Naive thymus-derived CD4-positive, alpha-beta T cell (primary cell): ENCODE measurements at regions of chr9 and their contacts with region 1.

Region 1: DNA sequence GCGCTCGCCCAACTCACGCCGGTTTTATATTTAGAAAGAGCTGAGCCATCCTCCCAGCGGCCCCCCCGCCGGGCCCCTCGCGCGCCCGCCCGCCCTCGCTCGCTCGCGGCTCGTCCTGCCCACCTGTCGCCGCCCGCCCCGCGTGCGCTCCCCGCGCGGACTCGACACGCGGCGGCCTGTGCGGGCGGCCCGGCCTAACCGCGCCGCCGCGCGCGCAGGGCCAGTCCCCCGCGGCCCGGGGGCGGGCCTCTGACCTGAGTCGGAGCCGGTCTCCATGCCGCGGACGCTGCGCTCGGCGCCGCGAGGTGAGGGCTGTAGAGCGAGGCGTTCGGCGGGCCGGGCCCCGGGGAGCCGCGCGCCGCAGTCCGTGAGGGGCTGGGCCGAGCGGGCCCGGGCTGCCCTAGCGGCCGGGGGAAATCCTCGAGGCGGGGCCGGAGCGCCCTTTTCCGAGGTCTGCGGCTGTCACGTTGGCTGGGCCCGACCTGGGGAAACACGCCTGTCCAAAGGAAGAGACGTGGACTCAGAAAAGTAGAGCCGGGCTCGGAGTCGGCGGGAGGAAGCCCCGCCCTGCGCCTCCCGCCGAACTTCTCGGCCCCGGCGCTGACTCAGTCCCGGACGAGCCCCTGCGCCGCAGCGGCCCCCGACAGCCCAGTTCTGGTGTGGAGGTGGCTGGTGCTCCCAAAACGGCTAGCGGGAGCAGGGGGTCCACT is at the start of gene ECPAS:
- DNase-seq: peak; percentile 53 to 78 (median 62)
- ATAC-seq: peak; percentile 74
- H3K4me3 ChIP-seq: peak within 1 kb of the TSS; percentile 66
- H3K4me3 Mint-ChIP-seq: peak within 1 kb of the TSS; percentile 69 to 93 (median 88)
- H3K27ac ChIP-seq: peak within 1 kb of the TSS; percentile 74
- H3K27ac Mint-ChIP-seq: peak within 1 kb of the TSS; percentile 60 to 92 (median 85)
- H3K4me1 ChIP-seq: peaks cover 0 to 8% of the 10 kb centered on the region in 2 donors
- H3K4me1 Mint-ChIP-seq: peaks cover 16 to 31% (median 27%) of the 10 kb centered on the region in 7 donors
- H3K27me3 ChIP-seq: no peaks in the 10 kb centered on the region
- H3K27me3 Mint-ChIP-seq: peaks cover 0 to 13% (median 5%) of the 10 kb centered on the region in 5 donors
- total RNA-seq, gene ECPAS: 35.4 to 86.1 (median 49.2) TPM

Region 2: GRCh38 chr9:111427186-111427585 is 56.8 kb before region 1 on chr9:
- CTCF ChIA-PET with region 1: no interaction called
- POLR2A ChIA-PET with region 1: no interaction called
- intact Hi-C with region 1: loop called in 1 of 2 experiments (anchors 5 kb)
- DNase-seq: no peak
- ATAC-seq: no peak
- H3K4me3 ChIP-seq: no peak overlapping the region
- H3K4me3 Mint-ChIP-seq: no peak overlapping the region
- H3K27ac ChIP-seq: no peak overlapping the region
- H3K27ac Mint-ChIP-seq: peak overlapping the region in 1 of 9 donors; percentile 47
- H3K4me1 ChIP-seq: no peaks in the 10 kb centered on the region
- H3K4me1 Mint-ChIP-seq: peaks cover 0 to 13% (median 0%) of the 10 kb centered on the region in 7 donors
- H3K27me3 ChIP-seq: no peaks in the 10 kb centered on the region
- H3K27me3 Mint-ChIP-seq: no peaks in the 10 kb centered on the region

Region 3: DNA sequence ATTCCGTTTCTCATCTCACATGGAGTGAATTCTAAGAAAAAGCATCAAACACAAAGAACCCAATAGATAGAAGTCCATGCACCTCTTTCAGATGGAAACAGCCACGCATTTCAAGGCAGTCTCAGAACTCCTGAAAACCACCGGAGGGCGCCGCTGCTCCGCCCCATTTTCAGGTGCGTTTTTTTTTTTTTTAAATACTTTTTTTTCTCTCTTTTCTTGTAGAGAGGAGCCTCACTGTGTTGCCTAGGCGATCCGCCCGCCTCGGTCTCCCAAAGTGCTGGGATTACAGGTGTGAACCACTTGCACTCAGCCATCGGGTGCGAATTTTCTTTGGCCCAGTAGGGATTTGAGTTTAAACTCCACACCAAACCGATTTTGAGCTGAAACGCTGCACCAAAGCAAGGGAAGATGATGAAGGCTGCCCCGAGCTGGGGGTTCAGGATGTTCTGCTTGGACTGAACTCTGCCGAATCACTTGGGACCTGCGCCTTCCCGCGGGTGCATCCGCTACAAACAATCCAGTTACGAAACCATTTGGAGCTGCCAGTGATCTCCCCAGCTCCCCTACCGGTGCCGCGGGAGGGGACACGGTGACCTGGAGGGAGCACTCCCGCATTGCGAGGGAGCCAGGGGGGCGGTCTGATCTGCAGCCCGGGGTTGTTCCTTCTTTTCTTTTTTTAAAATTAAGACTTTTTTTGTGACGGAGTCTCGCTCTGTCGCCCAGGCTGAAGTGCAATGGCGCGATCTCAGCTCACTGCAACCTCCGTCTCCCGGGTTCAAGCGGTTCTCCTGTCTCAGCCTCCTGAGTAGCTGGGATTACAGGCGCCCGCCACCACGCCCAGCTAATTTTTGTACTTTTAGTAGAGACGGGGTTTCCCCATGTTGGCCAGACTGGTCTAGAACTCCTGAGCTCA is 114.1 kb after region 1 on chr9:
- CTCF ChIA-PET with region 1: no interaction called
- POLR2A ChIA-PET with region 1: interaction called, 3 read pairs
- intact Hi-C with region 1: loop called (anchors 10 kb)
- DNase-seq: peak; percentile 40 to 77 (median 65)
- ATAC-seq: peak; percentile 82
- H3K4me3 ChIP-seq: peak overlapping the region; percentile 33
- H3K4me3 Mint-ChIP-seq: peak overlapping the region; percentile 77 to 94 (median 89)
- H3K27ac ChIP-seq: no peak overlapping the region
- H3K27ac Mint-ChIP-seq: peak overlapping the region in 4 of 9 donors; percentile 2 to 62 (median 42)
- H3K4me1 ChIP-seq: peaks cover 12 to 15% of the 10 kb centered on the region in 2 donors
- H3K4me1 Mint-ChIP-seq: peaks cover 13 to 29% (median 24%) of the 10 kb centered on the region in 7 donors
- H3K27me3 ChIP-seq: peaks cover 0 to 9% of the 10 kb centered on the region in 2 donors
- H3K27me3 Mint-ChIP-seq: peaks cover 17 to 42% (median 29%) of the 10 kb centered on the region in 5 donors

Region 4: DNA sequence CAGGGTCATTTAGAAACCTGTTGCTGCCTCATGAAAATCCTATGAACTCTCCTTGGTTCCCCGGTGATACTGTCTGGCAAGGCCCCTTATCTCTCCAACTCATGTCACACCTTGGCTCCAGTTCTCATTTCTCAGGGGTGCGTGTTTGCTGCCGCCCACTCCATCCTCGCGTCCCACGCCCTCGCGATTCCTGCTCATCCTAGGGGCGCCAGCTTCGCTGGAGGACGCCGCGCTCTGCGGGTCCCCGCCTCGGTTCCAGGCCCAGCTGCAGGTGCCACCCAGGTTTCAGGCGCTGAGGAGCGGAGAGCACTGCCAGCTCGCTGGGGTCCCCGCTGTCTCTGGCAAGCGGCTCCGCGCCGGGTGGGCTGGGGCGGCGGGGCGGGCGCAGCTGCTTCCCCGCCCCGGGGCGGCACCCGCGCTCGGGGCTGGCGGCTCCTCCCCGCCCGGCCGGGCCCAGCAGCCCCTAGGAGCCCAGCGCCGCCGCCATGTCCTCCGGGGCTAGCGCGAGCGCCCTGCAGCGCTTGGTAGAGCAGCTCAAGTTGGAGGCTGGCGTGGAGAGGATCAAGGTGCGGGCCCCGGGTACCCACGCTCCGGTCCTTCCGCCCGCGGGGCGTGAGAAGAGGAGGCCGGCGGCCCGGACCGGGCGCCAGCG is 177.3 kb after region 1 on chr9 and contains the start of gene GNG10:
- CTCF ChIA-PET with region 1: no interaction called
- POLR2A ChIA-PET with region 1: interaction called, 4 read pairs
- intact Hi-C with region 1: loop called (anchors 1 kb)
- DNase-seq: peak; percentile 57 to 79 (median 68)
- ATAC-seq: peak; percentile 95
- H3K4me3 ChIP-seq: peak within 1 kb of the TSS; percentile 70
- H3K4me3 Mint-ChIP-seq: peak within 1 kb of the TSS; percentile 87 to 97 (median 93)
- H3K27ac ChIP-seq: peak within 1 kb of the TSS; percentile 71
- H3K27ac Mint-ChIP-seq: peak within 1 kb of the TSS; percentile 82 to 97 (median 92)
- H3K4me1 ChIP-seq: peaks cover 18 to 31% of the 10 kb centered on the region in 2 donors
- H3K4me1 Mint-ChIP-seq: peaks cover 16 to 44% (median 32%) of the 10 kb centered on the region in 7 donors
- H3K27me3 ChIP-seq: no peaks in the 10 kb centered on the region
- H3K27me3 Mint-ChIP-seq: no peaks in the 10 kb centered on the region
- total RNA-seq, gene GNG10: 5.3 to 26.1 (median 12.2) TPM

Region 5: GRCh38 chr9:112194969-112195431 is 711.0 kb after region 1 on chr9:
- CTCF ChIA-PET with region 1: no interaction called
- POLR2A ChIA-PET with region 1: no interaction called
- intact Hi-C with region 1: no loop called
- DNase-seq: no peak
- ATAC-seq: no peak
- H3K4me3 ChIP-seq: no peak overlapping the region
- H3K4me3 Mint-ChIP-seq: no peak overlapping the region
- H3K27ac ChIP-seq: no peak overlapping the region
- H3K27ac Mint-ChIP-seq: no peak overlapping the region
- H3K4me1 ChIP-seq: no peaks in the 10 kb centered on the region
- H3K4me1 Mint-ChIP-seq: peaks cover 0 to 12% (median 0%) of the 10 kb centered on the region in 7 donors
- H3K27me3 ChIP-seq: no peaks in the 10 kb centered on the region
- H3K27me3 Mint-ChIP-seq: no peaks in the 10 kb centered on the region

Region 6: GRCh38 chr9:112486221-112487007 is 1002.4 kb after region 1 on chr9 and contains the start of gene KIAA1958:
- CTCF ChIA-PET with region 1: no interaction called
- POLR2A ChIA-PET with region 1: no interaction called
- intact Hi-C with region 1: loop called (anchors 2 to 10 kb)
- DNase-seq: peak; percentile 51 to 88 (median 73)
- ATAC-seq: peak; percentile 88
- H3K4me3 ChIP-seq: peak within 1 kb of the TSS; percentile 69
- H3K4me3 Mint-ChIP-seq: peak within 1 kb of the TSS; percentile 95 to 100 (median 98)
- H3K27ac ChIP-seq: peak within 1 kb of the TSS; percentile 72
- H3K27ac Mint-ChIP-seq: peak within 1 kb of the TSS; percentile 93 to 98 (median 97)
- H3K4me1 ChIP-seq: peaks cover 4 to 6% of the 10 kb centered on the region in 2 donors
- H3K4me1 Mint-ChIP-seq: peaks cover 19 to 64% (median 49%) of the 10 kb centered on the region in 7 donors
- H3K27me3 ChIP-seq: no peaks in the 10 kb centered on the region
- H3K27me3 Mint-ChIP-seq: peaks cover 0 to 6% (median 0%) of the 10 kb centered on the region in 5 donors
- total RNA-seq, gene KIAA1958: 6.2 to 8.3 (median 7.0) TPM

Region 7: GRCh38 chr9:112750111-112750767 is 1266.2 kb after region 1 on chr9 and contains the start of gene SNX30:
- CTCF ChIA-PET with region 1: no interaction called
- POLR2A ChIA-PET with region 1: no interaction called
- intact Hi-C with region 1: loop called in 1 of 2 experiments (anchors 10 kb)
- DNase-seq: peak; percentile 66 to 83 (median 75)
- ATAC-seq: peak; percentile 94
- H3K4me3 ChIP-seq: peak within 1 kb of the TSS; percentile 70
- H3K4me3 Mint-ChIP-seq: peak within 1 kb of the TSS; percentile 88 to 94 (median 92)
- H3K27ac ChIP-seq: peak within 1 kb of the TSS; percentile 68
- H3K27ac Mint-ChIP-seq: peak within 1 kb of the TSS; percentile 88 to 98 (median 96)
- H3K4me1 ChIP-seq: peaks cover 46% of the 10 kb centered on the region in 2 donors
- H3K4me1 Mint-ChIP-seq: peaks cover 39 to 66% (median 60%) of the 10 kb centered on the region in 7 donors
- H3K27me3 ChIP-seq: no peaks in the 10 kb centered on the region
- H3K27me3 Mint-ChIP-seq: peaks cover 0 to 4% (median 0%) of the 10 kb centered on the region in 5 donors
- total RNA-seq, gene SNX30: 6.6 to 15.8 (median 9.2) TPM

Region 8: DNA sequence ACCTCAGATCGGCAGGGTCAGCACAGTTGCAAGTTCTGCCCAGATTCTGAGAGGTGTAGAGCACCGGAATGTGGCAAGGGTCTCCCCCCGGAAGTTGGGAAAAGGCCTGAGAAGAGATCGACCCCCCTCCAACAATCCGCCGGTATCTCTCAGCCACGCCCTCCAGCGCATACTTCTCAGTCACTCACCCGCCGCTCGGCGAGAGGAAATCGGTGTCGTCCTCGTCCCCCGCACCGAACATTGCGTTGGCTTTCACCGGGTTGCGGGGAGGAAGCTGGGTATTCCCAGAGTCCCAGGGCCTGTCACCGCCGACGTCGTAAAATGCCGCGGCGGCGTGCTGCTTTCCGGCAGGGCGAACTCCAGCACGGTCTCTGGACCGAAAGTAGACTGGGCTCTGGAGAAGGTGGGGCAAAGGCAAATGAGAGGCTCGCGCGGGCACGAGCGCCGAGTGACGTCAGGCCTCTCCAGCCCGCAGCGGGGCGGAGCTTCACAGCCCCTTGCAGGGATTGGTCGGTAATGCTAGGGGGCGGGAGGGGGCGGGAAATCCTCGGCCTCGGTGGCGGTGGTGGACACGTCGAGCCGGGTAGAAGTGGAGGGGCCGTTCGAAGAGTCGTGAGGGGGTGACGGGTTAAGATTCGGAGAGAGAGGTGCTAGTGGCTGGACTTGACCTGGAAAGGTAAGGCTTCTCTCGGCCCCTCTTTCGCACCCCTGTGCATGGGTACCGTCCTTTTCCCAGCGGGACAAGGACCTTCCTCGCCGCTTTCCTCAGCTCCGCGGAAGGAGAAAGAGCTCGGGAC is 1737.2 kb after region 1 on chr9 and contains the starts of genes FKBP15 and SLC31A1:
- CTCF ChIA-PET with region 1: no interaction called
- POLR2A ChIA-PET with region 1: no interaction called
- intact Hi-C with region 1: loop called in 1 of 2 experiments (anchors 2 kb)
- DNase-seq: peak; percentile 88 to 96 (median 96)
- ATAC-seq: peak; percentile 99
- H3K4me3 ChIP-seq: peak within 1 kb of the TSS; percentile 91
- H3K4me3 Mint-ChIP-seq: peak within 1 kb of the TSS; percentile 89 to 99 (median 94)
- H3K27ac ChIP-seq: peak within 1 kb of the TSS; percentile 94
- H3K27ac Mint-ChIP-seq: peak within 1 kb of the TSS; percentile 86 to 98 (median 94)
- H3K4me1 ChIP-seq: peaks cover 10 to 25% of the 10 kb centered on the region in 2 donors
- H3K4me1 Mint-ChIP-seq: peaks cover 15 to 58% (median 48%) of the 10 kb centered on the region in 7 donors
- H3K27me3 ChIP-seq: no peaks in the 10 kb centered on the region
- H3K27me3 Mint-ChIP-seq: no peaks in the 10 kb centered on the region
- total RNA-seq, gene FKBP15: 22.4 to 50.6 (median 33.4) TPM
- total RNA-seq, gene SLC31A1: 4.5 to 10.4 (median 4.7) TPM